A673 (cell line): ENCODE measurements at regions of chr11 and their contacts with region 1.

Region 1: DNA sequence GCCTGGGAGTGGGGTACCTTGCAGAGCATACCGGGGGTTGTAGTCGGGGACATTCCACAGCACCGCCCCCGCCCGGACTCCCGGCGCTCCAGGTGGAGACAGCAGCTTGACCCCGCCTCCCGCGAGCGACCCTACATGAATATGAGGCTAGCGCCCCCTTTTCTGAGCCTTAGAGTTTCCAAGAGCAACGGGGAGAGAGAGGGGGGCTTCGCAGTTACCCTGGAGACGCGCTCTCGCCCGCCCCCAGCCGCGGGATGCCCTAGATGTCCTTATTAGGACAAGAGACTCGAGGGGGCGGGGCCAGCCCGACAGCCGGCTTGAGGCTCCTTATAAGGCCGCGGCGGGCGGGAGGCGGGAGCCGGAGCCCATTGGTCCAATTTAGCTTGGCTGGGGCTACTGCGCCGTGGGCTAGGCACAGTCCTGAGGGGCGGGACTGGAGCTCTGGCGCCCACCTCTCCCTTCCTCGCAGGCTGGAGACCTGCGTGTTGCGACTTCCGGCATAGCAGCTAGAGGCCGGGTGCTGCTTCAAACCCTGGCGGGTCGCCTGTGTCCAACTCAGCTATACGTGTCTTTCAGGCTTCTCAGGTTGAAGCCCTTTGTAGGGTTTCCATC is 927 bp upstream of the MUS81 start:
- DNase-seq: peak; percentile 100
- H3K4me3 ChIP-seq: peak overlapping the region; percentile 95
- H3K27ac ChIP-seq: peak overlapping the region; percentile 99
- H3K4me1 ChIP-seq: peaks cover 25% of the 10 kb centered on the region
- H3K27me3 ChIP-seq: no peaks in the 10 kb centered on the region
- CTCF ChIP-seq: peak; percentile 44; the same call in 1 of the 2 replicates

Region 2: GRCh38 chr11:65646921-65647751 is 212.2 kb before region 1 on chr11:
- CTCF ChIA-PET with region 1: no interaction called
- POLR2A ChIA-PET with region 1: interaction called, 11 read pairs
- intact Hi-C with region 1: no loop called
- DNase-seq: peak; percentile 57
- H3K4me3 ChIP-seq: peak overlapping the region; percentile 39
- H3K27ac ChIP-seq: no peak overlapping the region
- H3K4me1 ChIP-seq: no peaks in the 10 kb centered on the region
- H3K27me3 ChIP-seq: no peaks in the 10 kb centered on the region
- CTCF ChIP-seq: no peak

Region 3: DNA sequence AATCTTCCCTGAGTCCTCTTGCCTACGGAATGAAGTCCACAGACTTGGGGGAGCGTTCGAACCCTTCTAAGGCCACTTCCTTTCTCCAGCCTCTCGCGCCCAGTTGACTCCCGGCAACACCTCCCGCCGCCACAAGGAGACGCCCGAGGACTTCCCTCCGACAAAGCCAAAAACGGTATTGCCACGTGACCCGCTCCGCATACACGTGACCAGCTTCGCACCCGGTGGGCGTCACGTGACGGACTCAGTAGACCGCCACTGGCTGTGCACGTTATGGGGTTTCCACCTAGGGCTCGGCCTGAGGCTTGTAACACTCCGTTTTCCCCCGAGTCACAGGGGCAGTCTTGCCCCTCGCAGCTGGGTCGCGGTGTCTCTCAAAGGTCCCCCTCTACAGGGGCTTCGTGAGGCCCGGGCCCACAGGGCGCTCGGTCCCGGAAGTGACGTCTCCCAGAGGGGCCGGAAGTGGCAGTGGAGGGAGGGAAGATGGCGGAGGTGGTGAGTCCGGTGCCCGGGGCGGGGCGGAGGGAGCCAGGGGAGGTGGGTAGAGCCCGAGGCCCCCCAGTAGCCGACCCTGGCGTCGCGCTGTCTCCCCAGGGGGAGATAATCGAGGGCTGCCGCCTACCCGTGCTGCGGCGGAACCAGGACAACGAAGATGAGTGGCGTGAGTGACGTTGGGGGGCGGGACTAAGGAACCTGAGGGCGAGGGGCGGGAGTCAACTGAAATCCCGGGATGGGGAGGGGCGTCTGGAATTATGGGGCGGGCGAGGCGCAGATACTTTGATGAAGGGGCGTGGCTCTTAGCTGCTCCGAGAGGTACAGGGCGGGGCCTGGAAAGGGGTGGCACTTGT is 147.3 kb before region 1 on chr11 and contains the start of gene KAT5:
- CTCF ChIA-PET with region 1: interaction called, 5 read pairs
- POLR2A ChIA-PET with region 1: interaction called, 18 read pairs
- intact Hi-C with region 1: no loop called
- DNase-seq: peak; percentile 100
- H3K4me3 ChIP-seq: peak within 1 kb of the TSS; percentile 58
- H3K27ac ChIP-seq: peak within 1 kb of the TSS; percentile 99
- H3K4me1 ChIP-seq: peaks cover 10% of the 10 kb centered on the region
- H3K27me3 ChIP-seq: no peaks in the 10 kb centered on the region
- CTCF ChIP-seq: peak; percentile 98
- total RNA-seq, gene KAT5: 68.1 and 71.3 TPM in 2 replicates

Region 4: DNA sequence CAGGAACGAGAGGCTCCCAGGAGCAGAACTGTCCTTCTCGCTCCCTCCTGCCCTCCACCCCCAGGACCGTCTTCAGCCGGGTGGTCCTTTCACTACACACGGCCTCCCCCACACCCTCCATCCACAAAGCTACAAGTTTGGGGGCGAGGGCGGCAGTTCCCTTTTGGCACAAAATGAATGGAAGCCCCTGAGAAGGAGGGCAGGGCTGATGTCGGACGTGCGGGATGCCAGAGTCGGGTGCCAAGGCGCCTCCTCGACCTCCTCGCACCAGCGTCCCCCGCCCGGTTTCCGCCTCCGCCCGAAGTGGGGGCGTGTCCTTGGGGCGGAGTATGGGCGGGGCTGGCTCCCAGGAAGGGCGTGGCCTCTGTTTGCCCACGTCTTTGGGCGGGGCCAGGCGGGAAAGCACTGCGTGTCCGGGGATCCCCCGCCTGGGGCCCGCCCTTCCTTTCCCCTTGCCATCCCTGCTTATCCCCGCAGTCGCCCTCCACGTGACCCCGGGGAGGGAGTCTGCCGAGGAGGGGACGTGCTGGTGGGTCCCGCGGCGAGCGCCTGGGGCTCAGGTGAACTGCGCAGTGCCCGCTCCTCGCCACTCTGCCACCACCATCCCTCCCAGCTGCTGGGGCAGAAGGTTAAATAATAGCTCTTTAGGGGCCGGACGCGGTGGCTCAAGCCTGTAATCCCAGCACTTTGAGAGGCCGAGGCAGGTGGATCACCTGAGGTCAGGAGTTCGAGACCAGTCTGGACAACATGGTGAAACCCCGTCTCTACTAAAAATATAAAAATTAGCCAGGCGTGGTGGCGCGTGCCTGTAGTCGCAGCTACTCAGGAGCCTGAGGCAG is 14.2 kb after region 1 on chr11:
- CTCF ChIA-PET with region 1: interaction called, 14 read pairs
- POLR2A ChIA-PET with region 1: interaction called, 4 read pairs
- intact Hi-C with region 1: no loop called
- DNase-seq: peak; percentile 95
- H3K4me3 ChIP-seq: peak overlapping the region; percentile 68
- H3K27ac ChIP-seq: peak overlapping the region; percentile 75
- H3K4me1 ChIP-seq: peaks cover 18% of the 10 kb centered on the region
- H3K27me3 ChIP-seq: no peaks in the 10 kb centered on the region
- CTCF ChIP-seq: no peak